Sigmoid colon (tissue), 7 donors: ENCODE measurements at regions of chr1 and their contacts with region 1.

Region 1: GRCh38 chr1:152459596-152460528 is 45.8 kb upstream of the CRNN start:
- DNase-seq: peak; percentile 77
- H3K4me3 ChIP-seq: peak overlapping the region in 1 of 4 donors; percentile 18
- H3K27ac ChIP-seq: peak overlapping the region in 1 of 4 donors; percentile 37
- H3K4me1 ChIP-seq: peaks cover 0 to 7% (median 0%) of the 10 kb centered on the region in 4 donors
- H3K27me3 ChIP-seq: no peaks in the 10 kb centered on the region
- CTCF ChIP-seq: peak; percentile 29 to 69 (median 60)
- EP300 ChIP-seq: no peak
- POLR2A ChIP-seq: no peak

Region 2: DNA sequence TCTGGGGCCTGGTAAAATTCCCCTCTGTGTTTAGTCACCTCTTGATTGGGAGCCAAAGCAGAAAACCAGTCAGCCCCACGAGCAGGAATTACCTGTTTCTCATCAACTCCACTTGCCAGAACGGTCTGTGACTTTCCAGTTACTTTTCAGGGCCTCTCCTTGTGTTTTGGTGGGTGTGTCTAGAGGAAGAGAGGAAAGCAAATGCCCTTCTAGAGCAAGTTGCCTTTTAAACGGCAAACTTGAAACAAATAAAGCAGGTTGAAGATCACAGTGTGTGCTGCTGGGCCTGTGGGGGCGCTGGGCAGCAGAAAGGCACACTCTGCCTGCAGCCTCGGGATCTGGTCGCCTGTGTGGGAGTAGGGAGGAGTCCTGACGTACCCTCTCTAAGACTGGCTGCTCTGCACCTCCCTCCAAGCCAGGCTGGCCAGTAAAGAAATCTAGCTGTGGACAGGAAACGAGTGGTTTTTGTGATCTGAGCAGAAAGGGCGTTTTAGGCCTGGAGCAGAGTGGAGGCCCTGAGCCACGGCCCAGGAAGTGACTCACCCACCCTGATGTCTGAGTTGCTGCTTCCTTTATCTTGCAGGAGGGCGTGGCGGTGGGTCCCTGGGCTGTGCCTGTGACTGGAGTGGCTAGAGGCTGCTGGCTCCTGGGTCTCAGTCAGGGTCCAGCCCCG is 412.0 kb before region 1 on chr1:
- intact Hi-C with region 1: loop called (anchors 1 kb)
- DNase-seq: peak; percentile 96
- H3K4me3 ChIP-seq: peak overlapping the region in 2 of 4 donors; percentile 20 to 27
- H3K27ac ChIP-seq: peak overlapping the region; percentile 89 to 95 (median 92)
- H3K4me1 ChIP-seq: peaks cover 0 to 23% (median 19%) of the 10 kb centered on the region in 4 donors
- H3K27me3 ChIP-seq: no peaks in the 10 kb centered on the region
- CTCF ChIP-seq: peak in 3 of 4 experiments; percentile 24 to 53 (median 48)
- EP300 ChIP-seq: peak in 1 of 4 donors; percentile 76
- POLR2A ChIP-seq: peak; percentile 43 to 57

Region 3: GRCh38 chr1:152141974-152142584 is 317.8 kb before region 1 on chr1:
- intact Hi-C with region 1: loop called (anchors 1 kb)
- DNase-seq: no peak
- H3K4me3 ChIP-seq: no peak overlapping the region
- H3K27ac ChIP-seq: no peak overlapping the region
- H3K4me1 ChIP-seq: no peaks in the 10 kb centered on the region
- H3K27me3 ChIP-seq: peaks cover 0 to 3% (median 0%) of the 10 kb centered on the region in 3 donors
- CTCF ChIP-seq: peak; percentile 53 to 76 (median 62)
- EP300 ChIP-seq: no peak
- POLR2A ChIP-seq: no peak

Region 4: GRCh38 chr1:152189657-152190442 is 270.0 kb before region 1 on chr1:
- intact Hi-C with region 1: loop called (anchors 1 kb)
- DNase-seq: peak; percentile 67
- H3K4me3 ChIP-seq: peak overlapping the region; percentile 38 to 62 (median 54)
- H3K27ac ChIP-seq: peak overlapping the region; percentile 63 to 77 (median 70)
- H3K4me1 ChIP-seq: peaks cover 0 to 22% (median 11%) of the 10 kb centered on the region in 4 donors
- H3K27me3 ChIP-seq: no peaks in the 10 kb centered on the region
- CTCF ChIP-seq: peak in 3 of 4 experiments; percentile 52 to 63 (median 55)
- EP300 ChIP-seq: no peak
- POLR2A ChIP-seq: no peak

Region 5: DNA sequence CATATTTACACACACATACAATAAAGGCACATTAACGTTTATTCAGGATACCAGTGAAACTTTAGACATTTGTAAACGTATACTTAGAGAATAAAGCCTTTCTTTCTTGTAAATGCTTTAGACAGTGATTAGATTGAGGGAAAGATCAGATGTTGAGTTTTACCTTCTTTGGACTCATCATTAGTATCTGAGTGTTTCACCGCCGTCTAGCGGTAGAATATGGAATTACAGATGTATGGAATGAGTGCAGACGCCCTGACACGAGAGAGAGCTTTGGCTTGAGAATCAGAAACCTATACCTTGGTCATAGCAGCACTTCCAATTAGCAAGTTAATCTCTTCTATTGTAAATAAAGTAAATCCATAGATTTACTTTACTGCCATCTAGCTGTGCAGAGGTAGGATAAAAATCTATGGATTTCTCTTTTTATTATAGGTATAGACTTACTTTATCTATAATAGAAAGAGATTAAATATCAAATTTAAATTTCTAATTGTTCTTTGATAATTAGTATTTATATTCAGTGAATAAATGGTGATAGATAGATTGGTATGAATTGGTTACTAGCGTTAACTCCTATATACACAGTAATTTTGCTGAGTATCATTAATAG is 112.6 kb before region 1 on chr1:
- intact Hi-C with region 1: loop called (anchors 5 kb)
- DNase-seq: no peak
- H3K4me3 ChIP-seq: no peak overlapping the region
- H3K27ac ChIP-seq: no peak overlapping the region
- H3K4me1 ChIP-seq: no peaks in the 10 kb centered on the region
- H3K27me3 ChIP-seq: no peaks in the 10 kb centered on the region
- CTCF ChIP-seq: peak; percentile 22 to 64 (median 48)
- EP300 ChIP-seq: no peak
- POLR2A ChIP-seq: no peak

Region 6: GRCh38 chr1:152367434-152367833 is 92.4 kb before region 1 on chr1:
- intact Hi-C with region 1: no loop called
- DNase-seq: no peak
- H3K4me3 ChIP-seq: no peak overlapping the region
- H3K27ac ChIP-seq: no peak overlapping the region
- H3K4me1 ChIP-seq: no peaks in the 10 kb centered on the region
- H3K27me3 ChIP-seq: no peaks in the 10 kb centered on the region
- CTCF ChIP-seq: no peak
- EP300 ChIP-seq: no peak
- POLR2A ChIP-seq: no peak

Region 7: DNA sequence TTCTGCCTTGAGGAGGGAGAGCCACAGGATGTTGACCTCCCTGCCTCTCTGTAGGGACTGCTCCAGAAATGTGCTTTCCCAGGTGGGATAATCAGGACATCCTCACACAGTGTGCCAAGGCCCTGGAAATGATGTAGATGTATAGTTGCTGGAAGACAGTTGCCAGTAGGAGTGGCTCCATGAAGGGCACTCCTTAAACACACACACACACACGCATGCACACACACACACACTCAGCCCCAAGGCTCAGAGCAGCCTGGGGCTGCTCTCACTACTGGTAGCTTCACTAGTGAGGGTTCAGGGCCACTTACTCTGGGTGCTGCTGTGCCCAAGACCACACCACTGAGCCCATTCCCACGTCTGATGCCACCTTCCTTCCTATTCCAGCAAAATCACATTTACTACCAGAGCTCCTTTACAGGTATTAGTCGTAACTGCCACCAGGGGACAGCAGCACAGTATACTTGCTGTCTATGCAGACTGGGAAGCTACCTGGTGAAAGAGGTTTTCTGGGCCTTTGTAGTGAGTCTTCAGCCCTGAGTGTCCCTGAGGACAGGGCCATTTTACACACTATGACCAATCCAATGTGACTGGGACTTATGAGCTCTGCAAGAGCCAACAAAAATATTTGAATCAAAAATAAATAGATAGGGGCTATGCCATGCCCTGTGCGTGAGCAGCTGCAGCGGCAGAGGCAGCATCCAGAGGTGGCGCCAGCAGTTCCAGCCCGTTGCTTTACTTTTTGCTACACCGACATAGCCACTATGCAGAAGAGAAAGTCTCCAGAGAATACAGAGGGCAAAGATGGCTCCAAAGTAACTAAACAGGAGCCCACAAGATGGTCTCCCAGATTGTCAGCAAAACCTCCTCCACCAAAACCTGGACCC is 60.8 kb before region 1 on chr1:
- intact Hi-C with region 1: loop called (anchors 2 kb)
- DNase-seq: no peak
- H3K4me3 ChIP-seq: no peak overlapping the region
- H3K27ac ChIP-seq: no peak overlapping the region
- H3K4me1 ChIP-seq: no peaks in the 10 kb centered on the region
- H3K27me3 ChIP-seq: peaks cover 0 to 4% (median 0%) of the 10 kb centered on the region in 3 donors
- CTCF ChIP-seq: peak in 2 of 4 experiments; percentile 18 to 24
- EP300 ChIP-seq: no peak
- POLR2A ChIP-seq: no peak

Region 8: DNA sequence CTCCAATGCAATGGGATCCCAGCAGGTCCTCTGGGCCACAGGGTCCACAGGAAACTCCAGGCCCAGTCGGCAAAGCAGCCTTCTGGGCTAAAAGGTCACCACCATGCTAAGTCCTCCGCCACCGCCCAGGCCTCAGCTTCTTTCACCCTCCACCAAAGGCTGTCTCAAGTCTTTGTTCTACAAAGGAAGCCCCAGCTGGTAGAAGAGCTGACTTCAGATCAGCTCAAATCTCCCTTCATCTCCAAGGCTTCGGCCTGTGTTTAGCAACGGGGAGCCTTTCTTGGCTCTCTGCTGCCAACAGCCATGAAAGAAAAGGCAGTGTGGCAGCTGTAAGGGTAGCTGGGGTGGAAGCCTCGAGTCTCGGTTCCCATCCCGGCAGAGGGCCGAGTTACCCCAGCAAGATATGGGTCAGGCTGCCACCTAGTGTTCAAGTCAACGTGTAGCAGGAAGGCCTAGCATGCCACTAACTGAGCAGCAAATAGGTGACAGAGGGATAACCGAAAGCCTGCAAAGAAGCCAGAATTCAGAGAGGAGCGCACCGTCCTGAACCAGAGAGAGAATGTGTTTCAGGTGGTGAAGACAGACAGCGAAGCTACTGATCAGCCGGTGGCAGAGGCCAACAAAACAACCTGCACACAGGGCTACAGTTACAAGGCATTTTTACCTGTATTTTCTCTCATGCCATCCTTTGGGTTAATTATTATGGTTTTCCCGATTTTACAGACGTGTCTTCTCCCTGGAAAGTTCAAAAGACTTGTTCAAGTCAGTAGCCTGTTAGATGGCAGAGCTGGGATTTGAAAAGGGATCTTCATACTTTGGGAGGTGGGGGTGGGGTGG is 19.0 kb before region 1 on chr1:
- intact Hi-C with region 1: loop called (anchors 2 kb)
- DNase-seq: peak; percentile 85
- H3K4me3 ChIP-seq: no peak overlapping the region
- H3K27ac ChIP-seq: no peak overlapping the region
- H3K4me1 ChIP-seq: peaks cover 0 to 33% (median 12%) of the 10 kb centered on the region in 4 donors
- H3K27me3 ChIP-seq: no peaks in the 10 kb centered on the region
- CTCF ChIP-seq: peak; percentile 53 to 78 (median 68)
- EP300 ChIP-seq: no peak
- POLR2A ChIP-seq: no peak

Region 9: GRCh38 chr1:152495066-152495675 is 35.3 kb after region 1 on chr1:
- intact Hi-C with region 1: no loop called
- DNase-seq: no peak
- H3K4me3 ChIP-seq: no peak overlapping the region
- H3K27ac ChIP-seq: no peak overlapping the region
- H3K4me1 ChIP-seq: no peaks in the 10 kb centered on the region
- H3K27me3 ChIP-seq: no peaks in the 10 kb centered on the region
- CTCF ChIP-seq: no peak
- EP300 ChIP-seq: no peak
- POLR2A ChIP-seq: no peak